AG04450 (cell line): ENCODE measurements at regions of chr10 and their contacts with region 1.

Region 1: DNA sequence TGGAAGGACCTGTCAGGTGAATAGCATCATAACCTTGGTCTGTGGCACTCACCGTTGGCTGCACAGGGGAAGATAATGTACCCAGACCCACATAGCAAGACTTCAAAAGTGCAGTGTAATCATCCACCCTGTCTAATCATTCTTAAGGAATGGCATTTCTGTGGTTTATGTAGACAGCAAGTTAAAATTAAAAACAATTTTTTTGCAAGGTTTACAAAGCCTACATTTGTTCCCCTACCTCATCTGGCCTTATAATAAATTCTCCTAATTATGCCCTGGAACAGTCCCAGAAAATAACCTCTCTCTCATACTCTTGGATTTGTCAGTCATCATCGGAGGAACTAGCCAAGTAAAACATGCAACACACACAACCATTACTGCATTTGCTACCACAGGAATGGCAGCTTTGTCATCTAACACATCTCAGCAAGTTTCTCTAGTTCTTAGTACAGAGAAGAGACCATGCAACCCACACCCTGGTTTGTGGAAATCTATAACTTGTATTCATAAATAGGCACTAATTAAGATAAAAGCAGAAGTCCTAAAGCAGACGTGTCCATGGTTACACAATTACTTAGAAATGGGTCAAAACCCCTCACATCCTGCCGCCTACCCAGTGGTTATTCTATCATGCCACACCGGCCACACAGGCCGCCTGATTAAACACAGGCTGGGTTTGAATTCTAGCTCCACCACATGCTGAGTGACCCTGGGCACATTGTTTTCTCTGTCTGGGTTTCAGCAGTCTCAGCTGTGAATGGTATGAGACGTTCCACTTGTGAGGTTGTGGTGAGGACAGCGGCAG is 19.1 kb downstream of the ABLIM1 start:
- DNase-seq: peak; percentile 66
- H3K4me3 ChIP-seq: no peak overlapping the region
- H3K27ac ChIP-seq: no peak overlapping the region
- H3K27me3 ChIP-seq: no peaks in the 10 kb centered on the region
- CTCF ChIP-seq: no peak

Region 2: DNA sequence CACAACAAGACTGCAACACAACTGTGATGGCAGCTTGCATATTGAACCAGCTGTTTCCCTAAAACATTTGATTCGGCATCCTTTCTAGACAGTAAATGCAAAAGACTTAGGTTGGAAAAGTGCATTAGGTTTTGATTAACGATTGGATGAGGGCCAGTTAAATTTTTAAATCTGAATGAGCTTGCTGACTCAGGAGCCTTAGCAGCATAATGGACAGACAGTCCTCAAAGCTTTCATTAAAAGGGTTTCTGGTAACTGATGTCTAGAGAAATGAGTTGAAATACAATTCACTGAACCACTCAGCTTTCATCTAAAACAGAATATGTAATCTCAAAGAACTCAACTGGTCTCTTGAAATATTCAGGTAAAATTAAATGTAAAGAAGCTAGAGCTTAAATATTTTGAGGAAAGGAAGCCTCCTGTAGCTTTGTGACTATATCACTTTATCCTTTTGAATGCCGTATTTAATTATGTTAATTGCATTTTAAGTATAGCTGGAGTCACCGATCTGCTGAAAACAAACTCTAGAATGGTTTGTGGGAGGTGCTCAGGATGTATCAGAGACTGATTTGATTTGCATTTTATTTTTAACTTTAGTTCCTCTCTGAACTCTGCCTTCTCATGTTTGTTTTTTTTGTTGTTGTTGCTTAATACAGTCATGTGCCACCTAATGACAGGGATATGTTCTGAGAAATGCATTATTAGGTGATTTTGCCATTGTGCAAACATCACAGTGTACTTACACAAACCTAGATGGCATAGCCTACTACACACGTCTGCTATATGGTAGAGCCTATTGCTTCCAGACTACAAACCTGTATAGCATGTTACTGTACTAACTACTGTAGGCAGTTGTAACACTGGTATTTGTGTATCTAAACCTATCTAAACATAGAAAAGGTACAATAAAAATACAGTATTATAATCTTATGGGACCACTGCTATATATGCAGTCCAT is 425.0 kb after region 1 on chr10:
- CTCF ChIA-PET with region 1: interaction called, 10 read pairs
- POLR2A ChIA-PET with region 1: no interaction called
- DNase-seq: no peak
- H3K4me3 ChIP-seq: no peak overlapping the region
- H3K27ac ChIP-seq: no peak overlapping the region
- H3K27me3 ChIP-seq: peaks cover 6% of the 10 kb centered on the region
- CTCF ChIP-seq: no peak

Region 3: GRCh38 chr10:115082506-115082905 is 443.5 kb after region 1 on chr10:
- CTCF ChIA-PET with region 1: no interaction called
- POLR2A ChIA-PET with region 1: no interaction called
- DNase-seq: no peak
- H3K4me3 ChIP-seq: no peak overlapping the region
- H3K27ac ChIP-seq: no peak overlapping the region
- H3K27me3 ChIP-seq: no peaks in the 10 kb centered on the region
- CTCF ChIP-seq: no peak